K562 (cell line): ENCODE measurements at regions of chr2 and their contacts with region 1.

Region 1: DNA sequence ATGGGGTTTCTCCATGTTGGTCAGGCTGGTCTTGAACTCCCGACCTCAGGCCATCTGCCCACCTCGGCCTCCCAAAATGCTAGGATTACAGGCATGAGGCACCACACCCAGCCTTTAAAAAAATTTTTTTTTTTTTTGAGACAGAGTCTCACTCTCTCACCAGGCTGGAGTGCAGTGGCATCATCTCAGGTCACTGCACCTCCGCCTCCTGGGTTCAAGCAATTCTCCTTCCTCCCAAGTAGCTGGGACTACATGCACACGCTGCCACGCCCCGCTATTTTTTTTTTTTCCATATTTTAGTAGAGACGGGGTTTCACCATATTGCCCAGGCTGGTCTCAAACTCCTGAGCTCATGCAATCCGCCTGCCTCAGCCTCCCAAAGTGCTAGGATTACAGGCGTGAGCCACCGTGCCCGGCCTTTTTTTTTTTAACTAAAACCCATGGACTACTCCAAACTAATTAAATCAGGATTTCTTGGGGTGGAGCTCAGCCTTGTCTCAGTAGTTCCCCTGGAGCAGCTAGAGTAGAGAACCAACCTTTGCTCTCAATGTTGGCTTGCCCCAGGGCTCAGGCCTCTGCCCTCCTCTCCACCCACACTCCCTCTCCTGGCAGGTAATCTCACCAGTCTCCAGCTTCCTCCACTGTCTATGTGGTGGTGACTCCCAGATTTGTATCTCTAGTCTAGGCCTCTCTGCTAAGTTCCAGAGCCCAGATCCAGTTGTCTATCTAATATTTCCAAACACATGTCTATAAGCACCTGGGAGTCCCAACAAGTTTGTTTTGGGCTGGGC is 9.8 kb upstream of the MTA3 start:
- DNase-seq: no peak
- ATAC-seq: peak; percentile 29; the same call in 2 of the 3 replicates
- H3K4me3 ChIP-seq: no peak overlapping the region
- H3K27ac ChIP-seq: no peak overlapping the region
- H3K4me1 ChIP-seq: no peaks in the 10 kb centered on the region; a peak in 1 of 5 replicates
- H3K27me3 ChIP-seq: peaks cover 15 to 28% of the 10 kb centered on the region in 2 experiments
- CTCF ChIP-seq: peak in 1 of 3 experiments; percentile 23; a peak in 1 of 6 replicates
- EP300 ChIP-seq: no peak
- POLR2A ChIP-seq: no peak
- RAD21 ChIP-seq: no peak

Region 2: GRCh38 chr2:42386684-42387083 is 171.9 kb before region 1 on chr2:
- CTCF ChIA-PET with region 1: no interaction called
- POLR2A ChIA-PET with region 1: no interaction called
- in situ Hi-C with region 1: no loop called
- intact Hi-C with region 1: no loop called
- DNase-seq: peak; percentile 32 to 57 (median 42)
- ATAC-seq: peak; percentile 86
- H3K4me3 ChIP-seq: no peak overlapping the region
- H3K27ac ChIP-seq: no peak overlapping the region
- H3K4me1 ChIP-seq: no peaks in the 10 kb centered on the region
- H3K27me3 ChIP-seq: peaks cover 14 to 42% of the 10 kb centered on the region in 2 experiments; a peak in 3 of 5 replicates
- CTCF ChIP-seq: peak; percentile 48 to 66 (median 63)
- EP300 ChIP-seq: no peak
- POLR2A ChIP-seq: no peak
- RAD21 ChIP-seq: peak in 1 of 2 experiments; percentile 31; a peak in 2 of 4 replicates

Region 3: DNA sequence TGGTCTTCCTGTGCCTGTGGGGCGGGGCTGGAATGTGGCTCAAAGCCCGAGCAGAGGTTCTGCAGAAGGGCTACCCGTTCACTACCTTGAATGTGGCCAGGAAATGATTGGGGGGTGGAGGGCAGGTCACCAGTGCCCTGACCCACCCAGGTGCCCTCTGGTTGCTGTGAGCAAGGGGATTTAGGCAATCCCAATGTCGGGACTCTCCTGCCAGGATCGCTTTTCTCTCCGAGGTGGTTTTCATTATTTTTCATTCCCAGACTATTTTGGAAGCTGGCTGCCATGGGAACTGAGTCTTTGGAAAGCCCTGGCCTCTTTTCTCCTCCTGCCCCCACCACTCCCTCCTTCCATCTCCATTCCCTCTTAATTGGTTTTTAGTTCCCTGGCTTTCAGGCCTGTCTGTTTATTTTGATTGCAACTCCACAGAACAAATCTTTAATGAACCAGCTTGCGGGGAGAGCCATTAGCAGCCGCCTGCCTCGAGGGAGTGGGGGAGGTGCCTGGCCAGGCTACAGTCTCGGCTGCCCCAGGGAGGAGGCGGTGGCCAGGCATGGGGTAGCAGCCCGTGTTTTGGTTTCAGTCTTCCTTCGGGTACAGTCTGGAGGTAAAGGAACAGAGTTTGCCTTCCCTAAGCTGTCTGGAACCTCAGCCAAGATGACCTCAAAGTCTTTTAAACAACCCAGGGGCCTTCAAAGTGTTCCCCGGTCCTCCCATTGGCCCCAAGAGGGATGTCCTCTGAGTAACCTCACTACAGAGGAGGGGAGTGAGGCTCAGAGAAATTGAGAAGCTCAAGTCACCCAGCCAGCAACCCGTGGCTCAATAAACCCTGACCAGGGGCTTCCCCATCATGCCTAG is 348.2 kb after region 1 on chr2:
- CTCF ChIA-PET with region 1: no interaction called
- POLR2A ChIA-PET with region 1: no interaction called
- in situ Hi-C with region 1: loop called (anchors 10 kb)
- intact Hi-C with region 1: no loop called
- DNase-seq: peak; percentile 50 to 75 (median 70)
- ATAC-seq: peak; percentile 79
- H3K4me3 ChIP-seq: no peak overlapping the region
- H3K27ac ChIP-seq: peak overlapping the region; percentile 33; the same call in 1 of the 3 replicates
- H3K4me1 ChIP-seq: peaks cover 35 to 40% of the 10 kb centered on the region in 2 experiments
- H3K27me3 ChIP-seq: no peaks in the 10 kb centered on the region
- CTCF ChIP-seq: no peak
- EP300 ChIP-seq: no peak
- POLR2A ChIP-seq: no peak
- RAD21 ChIP-seq: no peak